Transverse colon (tissue), 4 donors: ENCODE measurements at regions of chr10 and their contacts with region 1.

Region 1: DNA sequence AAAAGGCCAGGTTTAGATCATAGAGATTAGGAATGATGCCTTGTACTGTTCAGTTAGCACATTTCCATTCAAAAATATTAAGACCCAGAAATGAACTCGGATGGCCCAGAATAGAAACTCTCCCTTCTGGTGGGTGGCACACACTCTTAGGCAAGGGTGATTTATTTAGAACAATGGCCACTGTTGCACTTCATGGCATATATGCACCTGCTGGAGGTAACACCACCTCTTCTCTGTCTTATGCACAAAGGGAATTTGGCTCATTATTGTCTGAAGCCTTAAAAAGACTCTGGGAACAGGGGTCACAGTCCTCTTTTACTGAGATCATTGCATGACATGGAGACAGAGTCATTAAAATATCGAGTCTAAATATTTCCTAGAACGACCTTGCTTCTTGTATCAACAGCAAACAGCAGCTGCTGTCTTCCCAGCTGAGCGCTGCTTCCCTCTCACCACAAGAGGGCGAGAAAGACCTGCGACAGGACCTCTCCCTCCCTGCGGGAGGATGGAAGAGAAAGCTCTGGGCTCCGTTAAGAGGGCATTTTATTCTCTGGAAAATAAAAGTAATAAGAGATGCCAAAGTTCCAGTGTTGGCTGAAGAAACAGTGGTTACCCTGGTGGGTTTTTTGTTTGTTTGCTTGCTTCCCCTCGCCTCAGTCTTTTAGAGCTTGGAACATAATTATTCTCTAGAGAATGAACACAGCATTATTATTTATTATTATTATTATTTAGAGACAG is 13.6 kb upstream of the BAMBI start:
- DNase-seq: peak; percentile 76
- H3K4me3 ChIP-seq: no peak overlapping the region
- H3K27ac ChIP-seq: no peak overlapping the region
- H3K4me1 ChIP-seq: peaks cover 0 to 13% (median 6%) of the 10 kb centered on the region in 4 donors
- H3K27me3 ChIP-seq: peaks cover 36% of the 10 kb centered on the region
- CTCF ChIP-seq: peak; percentile 83 to 97 (median 91)
- EP300 ChIP-seq: no peak
- POLR2A ChIP-seq: no peak

Region 2: GRCh38 chr10:28704464-28705161 is 40.9 kb after region 1 on chr10:
- in situ Hi-C with region 1: no loop called
- intact Hi-C with region 1: no loop called
- DNase-seq: no peak
- H3K4me3 ChIP-seq: no peak overlapping the region
- H3K27ac ChIP-seq: no peak overlapping the region
- H3K4me1 ChIP-seq: no peaks in the 10 kb centered on the region
- H3K27me3 ChIP-seq: no peaks in the 10 kb centered on the region
- CTCF ChIP-seq: no peak
- EP300 ChIP-seq: no peak
- POLR2A ChIP-seq: no peak

Region 3: GRCh38 chr10:28984431-28984830 is 320.7 kb after region 1 on chr10:
- in situ Hi-C with region 1: loop called in 2 of 4 experiments (anchors 10 kb)
- intact Hi-C with region 1: no loop called
- DNase-seq: peak; percentile 44
- H3K4me3 ChIP-seq: no peak overlapping the region
- H3K27ac ChIP-seq: no peak overlapping the region
- H3K4me1 ChIP-seq: peaks cover 0 to 7% (median 3%) of the 10 kb centered on the region in 4 donors
- H3K27me3 ChIP-seq: no peaks in the 10 kb centered on the region
- CTCF ChIP-seq: no peak
- EP300 ChIP-seq: no peak
- POLR2A ChIP-seq: no peak

Region 4: GRCh38 chr10:28991326-28992270 is 327.9 kb after region 1 on chr10:
- in situ Hi-C with region 1: loop called in 3 of 4 experiments (anchors 5 to 10 kb)
- intact Hi-C with region 1: loop called (anchors 5 kb)
- DNase-seq: peak; percentile 35
- H3K4me3 ChIP-seq: no peak overlapping the region
- H3K27ac ChIP-seq: no peak overlapping the region
- H3K4me1 ChIP-seq: no peaks in the 10 kb centered on the region
- H3K27me3 ChIP-seq: no peaks in the 10 kb centered on the region
- CTCF ChIP-seq: peak; percentile 58 to 69 (median 63)
- EP300 ChIP-seq: no peak
- POLR2A ChIP-seq: no peak

Region 5: GRCh38 chr10:29120237-29120636 is 456.5 kb after region 1 on chr10:
- in situ Hi-C with region 1: loop called in 2 of 4 experiments (anchors 5 to 25 kb)
- intact Hi-C with region 1: no loop called
- DNase-seq: no peak
- H3K4me3 ChIP-seq: no peak overlapping the region
- H3K27ac ChIP-seq: no peak overlapping the region
- H3K4me1 ChIP-seq: no peaks in the 10 kb centered on the region
- H3K27me3 ChIP-seq: no peaks in the 10 kb centered on the region
- CTCF ChIP-seq: no peak
- EP300 ChIP-seq: no peak
- POLR2A ChIP-seq: no peak

Region 6: GRCh38 chr10:29131952-29132820 is 468.4 kb after region 1 on chr10:
- in situ Hi-C with region 1: loop called in 1 of 4 experiments (anchors 25 kb)
- intact Hi-C with region 1: no loop called
- DNase-seq: no peak
- H3K4me3 ChIP-seq: no peak overlapping the region
- H3K27ac ChIP-seq: no peak overlapping the region
- H3K4me1 ChIP-seq: no peaks in the 10 kb centered on the region
- H3K27me3 ChIP-seq: no peaks in the 10 kb centered on the region
- CTCF ChIP-seq: no peak
- EP300 ChIP-seq: no peak
- POLR2A ChIP-seq: no peak

Region 7: GRCh38 chr10:29304264-29305030 is 640.7 kb after region 1 on chr10:
- in situ Hi-C with region 1: loop called in 3 of 4 experiments (anchors 10 kb)
- intact Hi-C with region 1: loop called (anchors 5 kb)
- DNase-seq: peak; percentile 41
- H3K4me3 ChIP-seq: no peak overlapping the region
- H3K27ac ChIP-seq: no peak overlapping the region
- H3K4me1 ChIP-seq: no peaks in the 10 kb centered on the region
- H3K27me3 ChIP-seq: no peaks in the 10 kb centered on the region
- CTCF ChIP-seq: peak; percentile 61 to 77 (median 68)
- EP300 ChIP-seq: no peak
- POLR2A ChIP-seq: no peak